ENCODE measurements at regions of chr10 and their contacts with region 1.

Region 1: GRCh38 chr10:3623746-3624145 is 161.3 kb downstream of the KLF6 start:
- DNase-seq: peak; percentile 67
- H3K4me3 ChIP-seq: no peak overlapping the region
- CTCF ChIP-seq: no peak

Region 2: DNA sequence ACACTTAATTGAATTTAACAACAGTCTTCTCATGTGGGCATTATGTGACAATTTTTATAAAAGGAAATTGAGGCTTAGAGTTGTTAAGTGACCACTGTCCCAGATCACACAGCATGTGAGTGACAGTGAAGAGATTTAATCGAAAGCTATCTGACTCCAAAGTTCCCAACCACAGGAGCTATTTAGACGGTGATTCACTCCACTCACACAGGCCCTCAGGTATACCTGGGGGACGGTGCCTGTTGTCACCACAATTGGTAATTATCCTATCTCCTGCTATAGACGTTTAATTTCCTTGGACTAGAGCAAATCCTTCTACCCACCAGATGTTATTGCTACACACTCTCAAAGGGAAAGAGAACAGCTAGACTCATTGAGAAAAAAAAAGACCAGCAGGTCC is 15.8 kb after region 1 on chr10:
- CTCF ChIA-PET with region 1: interaction called, 10 read pairs
- POLR2A ChIA-PET with region 1: no interaction called
- DNase-seq: no peak
- H3K4me3 ChIP-seq: no peak overlapping the region
- CTCF ChIP-seq: no peak

Measured in AG04449 (cell line).